ENCODE measurements at regions of chr2 and their contacts with region 1.

Region 1: DNA sequence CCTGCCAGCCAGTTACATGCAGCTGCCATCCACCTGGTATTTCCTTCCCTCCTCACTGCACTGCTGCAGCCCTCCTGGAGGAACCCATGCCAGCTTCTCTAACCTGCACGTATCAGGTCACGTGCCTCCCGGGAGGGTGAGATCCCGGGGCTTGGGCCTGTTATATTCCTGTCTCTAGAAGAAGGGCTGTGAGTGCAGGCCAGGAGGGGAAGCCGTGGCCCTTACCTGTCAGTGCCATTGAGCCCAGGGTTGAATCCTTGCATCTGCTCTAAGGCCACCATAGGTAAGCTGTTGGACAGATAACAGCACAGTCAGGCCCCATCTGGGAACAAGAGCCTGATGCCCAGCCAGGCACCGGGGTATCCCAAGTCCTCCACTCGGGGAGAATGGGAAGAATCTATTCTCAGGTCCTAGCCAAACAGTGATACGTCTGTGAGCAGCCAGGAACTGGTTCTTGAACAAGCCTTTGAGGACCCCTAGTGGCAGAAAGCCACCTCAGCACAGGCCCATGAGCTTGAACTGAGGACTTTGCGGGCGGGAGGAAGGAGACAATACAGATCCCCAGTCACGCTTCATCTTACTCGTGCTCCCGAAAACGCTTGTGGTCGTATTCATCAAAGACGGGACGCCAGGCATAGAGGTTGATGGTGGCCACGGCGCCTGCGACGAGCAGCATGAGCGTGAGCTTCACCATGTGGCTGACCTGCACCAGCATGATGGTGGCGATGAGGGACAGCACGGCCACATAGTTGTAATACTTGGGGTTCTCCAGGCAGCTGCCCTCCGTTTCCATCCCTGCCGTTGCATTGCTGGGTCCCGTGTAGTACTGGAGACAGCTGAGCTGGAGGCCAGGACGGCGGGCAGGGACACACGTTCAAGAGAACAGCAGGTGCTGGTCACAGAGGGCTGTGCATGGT is 34.4 kb downstream of the CENPO start:
- DNase-seq: peak in 1 of 2 donors; percentile 94
- H3K4me3 ChIP-seq: no peak overlapping the region
- H3K27ac ChIP-seq: no peak overlapping the region
- H3K4me1 ChIP-seq: peaks cover 7% of the 10 kb centered on the region
- H3K27me3 ChIP-seq: no peaks in the 10 kb centered on the region
- CTCF ChIP-seq: peak; percentile 42 to 85 (median 73)
- POLR2A ChIP-seq: no peak

Region 2: DNA sequence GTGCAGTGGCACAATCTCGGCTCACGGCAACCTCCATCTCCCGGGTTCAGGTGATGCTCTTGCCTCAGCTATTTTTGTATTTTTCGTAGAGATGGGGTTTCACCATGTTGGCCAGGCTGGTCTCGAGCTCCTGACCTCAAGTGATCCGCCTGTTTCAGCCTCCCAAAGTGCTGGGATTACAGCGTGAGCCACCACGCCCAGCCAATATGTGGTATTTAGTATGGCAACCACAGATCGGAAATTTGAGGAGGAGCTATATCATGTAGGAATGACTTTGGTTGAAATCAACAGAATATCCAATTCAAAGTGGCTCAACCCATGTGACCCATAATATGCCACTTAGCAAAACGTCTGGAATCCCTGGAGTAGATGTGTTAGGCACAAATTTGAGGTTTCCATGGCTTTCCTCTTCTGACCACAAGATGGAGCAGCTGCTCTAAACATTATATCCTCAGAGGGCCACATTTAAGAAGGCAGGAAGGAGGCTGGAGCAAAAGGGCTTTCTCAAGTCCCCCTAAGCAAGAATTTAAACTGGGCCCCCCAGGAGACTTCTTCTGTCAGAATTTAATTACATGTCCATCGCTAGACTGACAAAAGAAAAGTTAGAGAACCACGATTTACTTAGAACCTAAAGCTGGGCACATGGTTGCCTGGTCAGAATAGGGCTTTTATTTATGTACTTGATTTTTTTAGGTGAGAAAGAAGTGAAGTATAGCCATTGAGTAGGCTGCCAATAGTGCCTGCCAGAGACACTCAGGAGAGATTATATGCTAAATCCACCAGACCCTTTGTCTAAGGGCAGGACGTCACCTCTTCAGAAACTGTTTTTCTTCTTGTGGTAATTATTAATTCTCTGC is 417.7 kb before region 1 on chr2:
- intact Hi-C with region 1: loop called (anchors 5 kb)
- DNase-seq: no peak
- H3K4me3 ChIP-seq: no peak overlapping the region
- H3K27ac ChIP-seq: no peak overlapping the region
- H3K4me1 ChIP-seq: no peaks in the 10 kb centered on the region
- H3K27me3 ChIP-seq: no peaks in the 10 kb centered on the region
- CTCF ChIP-seq: peak; percentile 80 to 89 (median 83)
- POLR2A ChIP-seq: no peak

Region 3: DNA sequence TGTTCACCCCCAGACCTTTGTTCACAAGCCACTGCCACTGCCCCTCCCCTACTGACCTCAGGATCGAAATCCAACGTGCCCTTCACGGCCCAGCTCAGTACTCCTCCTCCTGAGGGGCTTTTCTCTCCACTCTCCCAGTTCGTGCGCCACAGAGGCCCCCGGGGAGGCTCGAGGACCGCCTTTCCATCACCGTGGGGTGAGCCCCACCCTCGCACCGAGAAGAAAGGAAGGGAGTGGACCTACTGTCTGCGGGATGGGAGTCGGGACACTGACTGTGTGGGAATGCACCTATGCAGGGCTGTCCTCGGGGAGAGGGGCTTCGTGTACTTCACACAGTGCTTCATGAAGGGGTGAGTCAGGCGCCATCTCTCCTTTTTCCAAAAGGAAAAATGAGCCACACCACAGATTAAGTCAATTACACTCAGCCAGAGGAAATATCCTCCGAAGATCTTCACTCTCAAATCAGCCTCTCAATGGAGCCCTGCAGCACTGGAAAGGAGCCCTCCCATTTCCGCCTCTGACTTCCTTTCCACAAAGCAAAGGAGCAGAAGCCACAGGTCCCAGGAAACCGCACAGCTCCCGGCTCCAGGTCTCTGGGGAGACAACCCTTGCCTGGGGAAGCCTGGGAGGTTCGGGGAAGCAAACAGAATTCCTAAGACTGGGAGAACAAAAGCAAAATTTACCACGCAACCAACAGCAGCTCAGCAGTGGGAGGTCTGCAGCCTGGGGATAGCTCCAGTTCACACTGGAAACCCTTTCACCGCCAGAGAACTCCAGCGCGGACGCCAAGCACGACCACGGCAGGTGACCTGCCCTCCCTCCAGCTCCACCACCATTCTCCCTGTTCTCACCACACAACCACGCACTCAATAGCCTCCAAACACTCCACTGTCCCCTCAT is 70.8 kb after region 1 on chr2:
- intact Hi-C with region 1: loop called (anchors 2 kb)
- DNase-seq: no peak
- H3K4me3 ChIP-seq: no peak overlapping the region
- H3K27ac ChIP-seq: no peak overlapping the region
- H3K4me1 ChIP-seq: no peaks in the 10 kb centered on the region
- H3K27me3 ChIP-seq: no peaks in the 10 kb centered on the region
- CTCF ChIP-seq: no peak
- POLR2A ChIP-seq: no peak

Region 4: DNA sequence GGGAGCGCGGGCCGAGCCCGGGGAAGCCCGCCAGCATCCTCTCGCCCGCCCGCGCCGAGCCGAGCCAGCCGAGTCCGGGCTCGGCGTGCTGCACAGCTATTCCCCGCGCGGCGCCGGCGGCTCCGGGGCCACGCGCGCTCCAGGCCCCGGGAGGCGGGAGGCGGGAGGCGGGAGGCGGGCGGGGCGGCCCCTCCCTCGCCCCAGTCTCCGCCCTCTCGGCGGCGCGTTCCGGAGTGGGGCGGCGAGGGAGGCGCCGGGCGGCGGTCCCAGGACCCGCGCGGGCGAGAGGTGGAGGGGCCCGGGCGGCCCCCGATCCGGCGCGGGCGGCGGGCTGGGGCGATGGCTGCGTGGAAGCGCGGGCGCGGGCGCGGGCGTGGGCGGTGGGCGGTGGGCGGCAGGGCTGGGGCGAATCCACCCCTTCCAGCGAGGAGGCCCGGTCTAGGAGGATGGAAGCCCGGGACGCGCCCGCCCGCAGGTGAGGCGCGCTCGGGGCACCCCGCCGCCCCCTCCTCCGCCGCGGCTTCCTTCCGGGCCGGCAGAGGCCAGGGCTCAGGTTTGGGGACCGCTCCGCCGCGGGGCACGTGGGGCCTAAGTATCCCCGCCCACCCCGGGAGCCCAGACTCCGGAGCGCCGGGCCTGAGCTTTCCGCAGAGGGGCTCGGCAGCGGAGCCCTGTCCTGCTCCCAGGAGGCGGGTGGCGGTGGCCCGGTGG is 92.7 kb after region 1 on chr2 and contains the start of gene ADCY3:
- intact Hi-C with region 1: no loop called
- DNase-seq: no peak
- H3K4me3 ChIP-seq: peak within 1 kb of the TSS; percentile 65 to 94
- H3K27ac ChIP-seq: peak within 1 kb of the TSS; percentile 90
- H3K4me1 ChIP-seq: peaks cover 41% of the 10 kb centered on the region
- H3K27me3 ChIP-seq: no peaks in the 10 kb centered on the region
- CTCF ChIP-seq: no peak
- POLR2A ChIP-seq: peak in 1 of 2 donors; percentile 23
- total RNA-seq, gene ADCY3: 90.6 TPM